ENCODE measurements at regions of chr2 and their contacts with region 1.

Region 1: DNA sequence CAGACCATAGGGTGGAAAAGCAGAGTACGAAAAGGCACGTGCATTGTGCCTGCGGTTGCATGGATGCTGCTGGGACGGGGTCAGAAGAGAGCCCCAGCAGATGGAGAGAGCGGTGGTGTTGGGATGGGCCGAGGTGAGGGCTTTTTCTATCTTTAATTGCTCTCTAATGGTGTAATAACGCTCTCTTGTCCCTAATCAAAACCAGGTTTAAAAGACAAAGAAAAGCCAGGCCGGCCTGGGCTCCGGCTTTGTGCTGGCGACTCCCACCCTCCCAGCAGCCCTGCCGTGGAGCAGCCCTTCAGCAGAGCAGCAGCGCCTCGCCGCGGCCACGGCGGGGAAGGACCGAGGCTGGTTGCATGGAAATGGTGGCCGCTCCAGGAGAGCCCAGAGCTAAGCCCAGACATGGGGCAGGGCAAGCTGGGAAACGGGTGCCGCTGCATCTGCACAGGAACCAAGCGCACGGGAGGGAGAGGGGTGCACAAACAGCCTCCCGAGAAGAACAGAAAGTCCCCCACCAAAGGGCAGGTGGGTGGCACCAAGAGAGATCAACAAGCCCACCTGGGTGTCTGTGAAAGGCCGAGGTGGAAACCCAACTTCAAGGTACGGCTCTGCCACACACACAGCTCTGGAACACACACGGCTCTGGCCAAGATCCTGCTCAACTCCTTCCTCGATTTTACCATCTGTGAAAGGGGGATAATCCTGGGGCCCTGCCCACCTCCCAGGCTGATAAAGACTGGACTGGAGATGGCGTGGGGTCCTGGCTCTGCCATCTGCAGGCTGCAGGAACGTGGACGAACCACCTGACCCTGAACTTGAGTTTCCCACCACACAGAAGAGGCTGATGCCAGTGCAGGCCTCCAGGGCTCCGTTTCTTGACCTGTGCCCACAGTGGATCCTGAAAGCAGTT is 15.0 kb downstream of the HS1BP3 start:
- DNase-seq: peak; percentile 78
- H3K4me3 Mint-ChIP-seq: no peak overlapping the region
- H3K27ac Mint-ChIP-seq: peak overlapping the region; percentile 2
- H3K4me1 Mint-ChIP-seq: peaks cover 13% of the 10 kb centered on the region
- H3K27me3 Mint-ChIP-seq: no peaks in the 10 kb centered on the region
- CTCF ChIP-seq: peak; percentile 98

Region 2: DNA sequence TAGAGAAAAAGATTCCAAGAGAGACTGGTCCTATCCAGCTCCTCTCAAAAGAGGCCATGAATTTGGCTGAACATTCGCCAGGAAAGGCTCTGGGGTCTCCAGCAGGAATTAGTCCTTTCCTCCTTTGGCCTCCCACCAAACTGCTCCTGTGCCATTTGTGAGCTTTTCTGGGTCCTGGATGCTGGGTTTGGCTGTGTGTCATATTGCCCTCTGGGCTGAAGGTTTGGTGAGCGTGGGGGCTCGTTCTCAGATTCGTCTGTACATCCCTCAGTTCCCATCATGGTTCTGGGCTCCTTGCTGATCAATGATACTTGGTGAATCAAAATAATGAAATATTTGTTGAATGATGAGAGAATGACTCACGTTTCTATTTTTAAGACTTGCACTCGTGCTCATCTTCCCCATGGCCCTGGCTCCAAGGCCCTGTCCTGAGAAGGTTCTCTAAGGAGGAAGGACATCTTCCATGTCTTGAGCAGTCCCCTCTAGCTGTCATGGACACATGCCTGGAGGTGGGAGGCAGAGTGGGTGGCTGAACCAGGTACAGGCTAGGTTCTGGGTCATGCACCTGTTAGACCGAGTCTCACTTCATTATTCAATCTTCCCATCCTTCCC is 236.9 kb before region 1 on chr2:
- CTCF ChIA-PET with region 1: interaction called, 78 read pairs
- POLR2A ChIA-PET with region 1: interaction called, 4 read pairs
- intact Hi-C with region 1: loop called (anchors 1 kb)
- DNase-seq: no peak
- H3K4me3 Mint-ChIP-seq: no peak overlapping the region
- H3K27ac Mint-ChIP-seq: no peak overlapping the region
- H3K4me1 Mint-ChIP-seq: peaks cover 25% of the 10 kb centered on the region
- H3K27me3 Mint-ChIP-seq: no peaks in the 10 kb centered on the region
- CTCF ChIP-seq: no peak

Region 3: GRCh38 chr2:20438334-20439192 is 197.4 kb before region 1 on chr2:
- CTCF ChIA-PET with region 1: interaction called, 121 read pairs
- POLR2A ChIA-PET with region 1: interaction called, 22 read pairs
- intact Hi-C with region 1: loop called (anchors 1 kb)
- DNase-seq: peak; percentile 89
- H3K4me3 Mint-ChIP-seq: peak overlapping the region; percentile 66
- H3K27ac Mint-ChIP-seq: peak overlapping the region; percentile 82
- H3K4me1 Mint-ChIP-seq: peaks cover 26% of the 10 kb centered on the region
- H3K27me3 Mint-ChIP-seq: no peaks in the 10 kb centered on the region
- CTCF ChIP-seq: no peak

Region 4: GRCh38 chr2:20507166-20507692 is 128.7 kb before region 1 on chr2:
- CTCF ChIA-PET with region 1: interaction called, 6 read pairs
- POLR2A ChIA-PET with region 1: interaction called, 3 read pairs
- intact Hi-C with region 1: loop called (anchors 5 kb)
- DNase-seq: no peak
- H3K4me3 Mint-ChIP-seq: no peak overlapping the region
- H3K27ac Mint-ChIP-seq: no peak overlapping the region
- H3K4me1 Mint-ChIP-seq: peaks cover 35% of the 10 kb centered on the region
- H3K27me3 Mint-ChIP-seq: no peaks in the 10 kb centered on the region
- CTCF ChIP-seq: no peak

Region 5: GRCh38 chr2:20617892-20618467 is 17.9 kb before region 1 on chr2:
- CTCF ChIA-PET with region 1: interaction called, 27 read pairs
- POLR2A ChIA-PET with region 1: interaction called, 7 read pairs
- intact Hi-C with region 1: loop called (anchors 1 kb)
- DNase-seq: peak; percentile 99
- H3K4me3 Mint-ChIP-seq: peak overlapping the region; percentile 31
- H3K27ac Mint-ChIP-seq: peak overlapping the region; percentile 78
- H3K4me1 Mint-ChIP-seq: peaks cover 33% of the 10 kb centered on the region
- H3K27me3 Mint-ChIP-seq: no peaks in the 10 kb centered on the region
- CTCF ChIP-seq: peak; percentile 18

Region 6: GRCh38 chr2:20682167-20682920 is 46.4 kb after region 1 on chr2:
- CTCF ChIA-PET with region 1: no interaction called
- POLR2A ChIA-PET with region 1: no interaction called
- intact Hi-C with region 1: no loop called
- DNase-seq: no peak
- H3K4me3 Mint-ChIP-seq: no peak overlapping the region
- H3K27ac Mint-ChIP-seq: no peak overlapping the region
- H3K4me1 Mint-ChIP-seq: no peaks in the 10 kb centered on the region
- H3K27me3 Mint-ChIP-seq: no peaks in the 10 kb centered on the region
- CTCF ChIP-seq: no peak

Region 7: DNA sequence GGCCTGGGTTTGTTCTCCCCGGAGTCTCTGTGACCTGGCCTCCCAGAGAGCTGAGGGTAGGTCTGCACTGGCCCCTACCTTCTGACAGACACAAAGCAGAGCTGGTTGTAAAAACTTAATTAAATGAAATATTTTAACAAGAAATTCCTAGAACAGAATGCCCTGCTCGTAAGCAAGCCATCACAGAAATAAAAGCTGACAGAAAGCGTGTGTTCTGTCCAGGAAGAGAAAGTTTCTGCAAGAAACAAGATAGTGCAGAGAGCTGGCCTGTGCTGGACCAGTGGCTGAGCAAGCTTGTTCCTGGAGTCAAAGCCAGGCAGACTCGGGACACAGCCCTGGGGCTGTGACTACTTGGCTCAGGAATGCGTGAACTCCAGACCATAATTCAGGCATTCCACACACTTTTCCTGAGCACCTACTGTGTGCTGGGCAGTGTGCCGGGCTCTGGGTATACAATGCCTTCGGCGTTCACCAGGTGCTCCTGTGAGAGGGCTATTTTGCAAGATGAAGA is 356.3 kb after region 1 on chr2:
- CTCF ChIA-PET with region 1: no interaction called
- POLR2A ChIA-PET with region 1: no interaction called
- intact Hi-C with region 1: no loop called
- DNase-seq: peak; percentile 33
- H3K4me3 Mint-ChIP-seq: no peak overlapping the region
- H3K27ac Mint-ChIP-seq: no peak overlapping the region
- H3K4me1 Mint-ChIP-seq: no peaks in the 10 kb centered on the region
- H3K27me3 Mint-ChIP-seq: no peaks in the 10 kb centered on the region
- CTCF ChIP-seq: no peak

Measured in MCF 10A (cell line).